Lower leg skin (tissue), 4 donors: ENCODE measurements at regions of chr12 and their contacts with region 1.

Region 1: GRCh38 chr12:111298582-111299436 is 70.1 kb downstream of the PHETA1 start:
- DNase-seq: no peak
- H3K4me3 ChIP-seq: no peak overlapping the region
- CTCF ChIP-seq: no peak
- POLR2A ChIP-seq: no peak

Region 2: DNA sequence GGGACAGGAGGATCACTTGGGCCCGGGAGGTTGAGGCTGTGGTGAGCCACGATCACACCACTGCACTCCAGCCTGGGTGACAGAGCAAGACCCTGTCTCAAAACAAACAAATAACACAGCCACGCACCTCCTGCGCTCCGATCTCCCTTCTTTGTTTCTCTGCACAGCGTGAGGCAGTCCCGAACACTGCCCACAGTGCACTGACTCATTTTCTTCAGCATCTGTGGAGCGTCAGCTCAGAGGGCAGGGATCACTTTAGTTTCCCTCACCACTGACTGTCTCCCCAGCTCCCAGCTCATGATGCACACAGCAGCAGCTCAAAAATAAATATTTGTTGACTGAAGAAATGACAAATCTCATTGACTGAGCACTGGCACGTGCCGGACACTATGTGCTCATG is 377.5 kb before region 1 on chr12:
- intact Hi-C with region 1: loop called (anchors 10 kb)
- DNase-seq: no peak
- H3K4me3 ChIP-seq: no peak overlapping the region
- CTCF ChIP-seq: no peak
- POLR2A ChIP-seq: no peak

Region 3: DNA sequence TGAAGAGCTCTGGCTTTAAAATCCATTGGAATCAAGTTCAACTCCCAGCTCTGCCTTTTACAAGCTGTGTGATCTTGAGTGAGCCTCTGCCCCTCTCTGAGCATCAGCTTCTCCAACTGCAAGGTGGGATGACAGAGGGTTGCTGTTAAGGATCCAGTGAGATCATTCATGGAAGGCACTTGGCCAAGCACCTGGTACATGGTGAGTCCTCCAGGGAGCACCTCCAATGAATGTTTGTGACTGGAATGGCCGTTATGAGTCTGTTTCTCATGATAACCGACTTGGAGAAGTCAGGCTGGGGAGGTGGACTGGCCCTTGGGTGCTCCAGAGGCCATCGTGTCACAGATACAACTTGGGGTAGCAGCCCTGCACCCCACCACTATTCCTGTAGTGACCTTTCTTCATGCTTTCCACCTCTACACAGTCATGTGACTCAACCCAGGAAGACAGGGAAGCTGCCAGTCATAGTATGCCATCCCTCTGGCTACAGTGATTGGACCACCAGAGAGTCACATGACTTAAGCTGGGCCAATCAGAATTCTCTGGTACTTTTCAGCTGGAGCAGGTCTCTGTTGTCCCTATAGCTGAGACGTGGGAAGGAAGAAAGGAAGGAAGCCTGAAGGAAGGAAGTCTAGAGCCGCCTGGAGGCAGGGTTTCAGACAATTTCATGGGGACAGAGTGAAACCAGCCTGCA is 231.9 kb before region 1 on chr12:
- intact Hi-C with region 1: no loop called
- DNase-seq: no peak
- H3K4me3 ChIP-seq: no peak overlapping the region
- CTCF ChIP-seq: no peak
- POLR2A ChIP-seq: no peak

Region 4: GRCh38 chr12:111261911-111262676 is 36.7 kb before region 1 on chr12:
- intact Hi-C with region 1: no loop called
- DNase-seq: no peak
- H3K4me3 ChIP-seq: no peak overlapping the region
- CTCF ChIP-seq: no peak
- POLR2A ChIP-seq: no peak